Heart right ventricle (tissue), 16 donors: ENCODE measurements at regions of chr11 and their contacts with region 1.

Region 1: GRCh38 chr11:58579192-58580129 is 598 bp downstream of the ZFP91 start:
- DNase-seq: peak; percentile 92 to 95
- ATAC-seq: peak; percentile 60 to 85 (median 72)
- H3K4me3 ChIP-seq: peak overlapping the region; percentile 69 to 99 (median 90)
- H3K27ac ChIP-seq: peak overlapping the region; percentile 95 to 100 (median 99)
- H3K4me1 ChIP-seq: peaks cover 12 to 76% (median 59%) of the 10 kb centered on the region in 9 donors
- H3K27me3 ChIP-seq: no peaks in the 10 kb centered on the region
- CTCF ChIP-seq: peak; percentile 66 to 94 (median 84)

Region 2: DNA sequence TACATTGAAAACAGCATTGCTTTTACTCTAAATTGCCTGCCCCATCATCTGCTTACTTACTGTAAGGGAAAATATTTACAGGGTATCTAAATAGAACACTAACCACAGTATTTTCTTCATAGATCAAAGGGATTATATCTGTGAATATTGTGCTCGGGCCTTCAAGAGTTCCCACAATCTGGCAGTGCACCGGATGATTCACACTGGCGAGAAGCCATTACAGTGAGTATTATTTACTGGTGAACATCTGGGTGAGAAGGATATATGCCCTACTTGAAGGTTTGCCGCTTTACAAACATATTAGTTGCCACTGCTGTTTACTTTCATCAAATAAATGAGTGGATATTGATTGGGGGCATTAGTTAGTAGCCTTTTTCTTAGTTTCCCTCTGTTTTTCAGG is 37.1 kb after region 1 on chr11:
- intact Hi-C with region 1: loop called in 4 of 10 experiments (anchors 5 to 10 kb)
- DNase-seq: peak in 1 of 2 donors; percentile 30
- ATAC-seq: peak in 6 of 8 donors; percentile 43 to 85 (median 52)
- H3K4me3 ChIP-seq: no peak overlapping the region
- H3K27ac ChIP-seq: peak overlapping the region in 2 of 10 donors; percentile 5 to 68
- H3K4me1 ChIP-seq: peaks cover 5 to 37% (median 21%) of the 10 kb centered on the region in 9 donors
- H3K27me3 ChIP-seq: no peaks in the 10 kb centered on the region
- CTCF ChIP-seq: no peak

Region 3: GRCh38 chr11:58675334-58676155 is 96.1 kb after region 1 on chr11:
- intact Hi-C with region 1: loop called in 9 of 10 experiments (anchors 2 to 10 kb)
- DNase-seq: peak; percentile 62 to 81
- ATAC-seq: peak; percentile 83 to 94 (median 90)
- H3K4me3 ChIP-seq: no peak overlapping the region
- H3K27ac ChIP-seq: no peak overlapping the region
- H3K4me1 ChIP-seq: no peaks in the 10 kb centered on the region
- H3K27me3 ChIP-seq: peaks cover 0 to 24% (median 14%) of the 10 kb centered on the region in 7 donors
- CTCF ChIP-seq: peak; percentile 73 to 97 (median 94)

Region 4: DNA sequence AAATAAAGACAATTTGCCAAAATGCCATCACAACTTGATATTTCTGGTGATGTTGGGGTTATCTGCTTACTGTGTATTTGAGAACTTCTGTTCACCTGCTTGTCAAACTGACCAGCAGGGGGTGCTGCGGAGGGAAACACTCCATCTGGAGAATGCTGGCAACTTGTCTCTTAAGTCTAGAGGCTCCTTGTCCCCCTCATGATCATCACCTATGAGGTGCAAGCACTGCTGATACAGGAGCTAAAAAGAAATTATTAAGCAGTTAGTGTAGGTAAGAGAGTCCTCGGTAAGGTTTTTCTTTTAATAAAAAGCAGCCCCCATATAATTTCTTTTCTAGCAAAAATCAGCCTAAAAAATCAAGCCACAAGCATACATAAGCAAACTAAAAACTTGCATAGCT is 473.9 kb after region 1 on chr11:
- intact Hi-C with region 1: no loop called
- DNase-seq: peak; percentile 51 to 57
- ATAC-seq: no peak
- H3K4me3 ChIP-seq: no peak overlapping the region
- H3K27ac ChIP-seq: no peak overlapping the region
- H3K4me1 ChIP-seq: peaks cover 0 to 3% (median 0%) of the 10 kb centered on the region in 9 donors
- H3K27me3 ChIP-seq: peaks cover 0 to 38% (median 19%) of the 10 kb centered on the region in 7 donors
- CTCF ChIP-seq: peak; percentile 25 to 85 (median 69)

Region 5: GRCh38 chr11:59142530-59143507 is 563.4 kb after region 1 on chr11 and contains the start of gene FAM111A:
- intact Hi-C with region 1: loop called in 1 of 10 experiments (anchors 10 kb)
- DNase-seq: peak; percentile 86 to 90
- ATAC-seq: peak; percentile 93 to 97 (median 96)
- H3K4me3 ChIP-seq: peak within 1 kb of the TSS; percentile 20 to 86 (median 70)
- H3K27ac ChIP-seq: peak within 1 kb of the TSS; percentile 44 to 94 (median 87)
- H3K4me1 ChIP-seq: peaks cover 0 to 48% (median 25%) of the 10 kb centered on the region in 9 donors
- H3K27me3 ChIP-seq: no peaks in the 10 kb centered on the region
- CTCF ChIP-seq: peak in 6 of 9 donors; percentile 5 to 52 (median 26)
- total RNA-seq, gene FAM111A: 4.0 to 18.6 (median 5.1) TPM